Activated CD4-positive, alpha-beta T cell treated with anti-CD3 and anti-CD28 coated beads, Interleukin-2, amount 10 ng/mL, durations not matched to agents 24 days and 14 days (primary cell): ENCODE measurements at regions of chr3 and their contacts with region 1.

Region 1: GRCh38 chr3:41608347-41608746 is 353.6 kb downstream of the ULK4 start:
- DNase-seq: no peak
- H3K4me3 Mint-ChIP-seq: no peak overlapping the region
- H3K27ac Mint-ChIP-seq: no peak overlapping the region
- H3K4me1 Mint-ChIP-seq: peaks cover 6% of the 10 kb centered on the region
- H3K27me3 Mint-ChIP-seq: peaks cover 5% of the 10 kb centered on the region

Region 2: GRCh38 chr3:41836360-41837134 is 228.2 kb after region 1 on chr3:
- intact Hi-C with region 1: loop called (anchors 2 kb)
- DNase-seq: no peak
- H3K4me3 Mint-ChIP-seq: no peak overlapping the region
- H3K27ac Mint-ChIP-seq: no peak overlapping the region
- H3K4me1 Mint-ChIP-seq: peaks cover 4% of the 10 kb centered on the region
- H3K27me3 Mint-ChIP-seq: no peaks in the 10 kb centered on the region

Region 3: DNA sequence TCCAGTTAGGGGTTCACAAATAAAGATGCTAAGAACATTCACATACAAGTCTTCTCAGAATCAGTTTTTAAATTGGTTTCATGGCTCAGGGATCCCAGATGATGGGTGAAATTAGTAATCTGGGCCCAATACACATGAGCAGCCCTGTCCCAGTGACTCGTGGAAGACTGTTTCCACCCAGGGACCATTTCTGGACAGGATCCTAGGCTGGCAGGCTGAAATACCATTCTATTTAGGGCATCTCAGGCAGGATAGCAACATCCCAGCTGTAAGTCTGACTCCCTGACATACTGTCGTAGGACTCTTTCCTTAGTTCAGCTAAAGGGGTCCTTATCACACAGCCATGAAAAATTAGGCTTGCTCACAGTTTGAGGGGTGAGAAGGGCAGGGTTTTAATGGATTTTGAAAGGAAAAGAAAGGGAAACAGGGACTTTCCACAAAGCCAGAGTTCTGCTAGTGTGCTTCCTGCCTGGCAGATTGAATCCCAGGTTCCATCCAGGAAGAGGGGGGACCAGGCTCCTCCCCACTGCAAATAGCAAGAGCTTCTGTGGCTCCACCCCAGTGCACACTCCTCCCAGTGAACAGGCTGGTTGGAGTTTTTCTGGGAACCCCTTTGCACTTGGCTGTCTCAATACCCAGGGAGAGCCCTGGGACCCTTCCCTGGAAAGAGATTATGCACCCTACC is 843.3 kb after region 1 on chr3:
- intact Hi-C with region 1: no loop called
- DNase-seq: no peak
- H3K4me3 Mint-ChIP-seq: no peak overlapping the region
- H3K27ac Mint-ChIP-seq: no peak overlapping the region
- H3K4me1 Mint-ChIP-seq: no peaks in the 10 kb centered on the region
- H3K27me3 Mint-ChIP-seq: peaks cover 11% of the 10 kb centered on the region